Left ventricle myocardium superior (tissue), 1 donor: ENCODE measurements at regions of chr4 and their contacts with region 1.

Region 1: DNA sequence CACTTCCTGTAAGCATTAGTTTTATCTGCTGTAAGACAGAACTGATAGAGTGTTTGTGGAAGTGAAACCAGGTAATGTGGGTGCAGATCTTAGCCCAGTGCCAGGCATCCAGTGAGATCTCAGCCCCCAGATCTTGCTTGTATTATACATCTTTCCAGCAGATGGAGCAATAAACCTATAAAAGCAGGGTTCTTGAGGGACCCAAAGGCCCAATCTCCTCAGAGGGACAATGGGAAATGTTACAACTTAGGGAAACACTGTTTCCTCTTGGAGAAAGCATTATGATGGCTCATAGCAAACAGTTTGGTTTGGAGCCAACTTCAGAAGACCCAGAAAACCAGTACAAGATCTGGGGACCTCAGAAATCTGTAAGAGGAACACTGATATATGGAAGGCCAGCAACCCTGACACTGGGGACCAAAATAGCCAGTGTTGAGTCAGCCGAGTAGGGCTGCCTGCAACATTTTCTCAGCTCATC is 206.3 kb downstream of the SLC7A11 start:
- DNase-seq: no peak
- ATAC-seq: peak; percentile 94

Region 2: GRCh38 chr4:138087066-138087719 is 51.4 kb after region 1 on chr4:
- intact Hi-C with region 1: no loop called
- DNase-seq: no peak
- ATAC-seq: peak; percentile 94

Region 3: DNA sequence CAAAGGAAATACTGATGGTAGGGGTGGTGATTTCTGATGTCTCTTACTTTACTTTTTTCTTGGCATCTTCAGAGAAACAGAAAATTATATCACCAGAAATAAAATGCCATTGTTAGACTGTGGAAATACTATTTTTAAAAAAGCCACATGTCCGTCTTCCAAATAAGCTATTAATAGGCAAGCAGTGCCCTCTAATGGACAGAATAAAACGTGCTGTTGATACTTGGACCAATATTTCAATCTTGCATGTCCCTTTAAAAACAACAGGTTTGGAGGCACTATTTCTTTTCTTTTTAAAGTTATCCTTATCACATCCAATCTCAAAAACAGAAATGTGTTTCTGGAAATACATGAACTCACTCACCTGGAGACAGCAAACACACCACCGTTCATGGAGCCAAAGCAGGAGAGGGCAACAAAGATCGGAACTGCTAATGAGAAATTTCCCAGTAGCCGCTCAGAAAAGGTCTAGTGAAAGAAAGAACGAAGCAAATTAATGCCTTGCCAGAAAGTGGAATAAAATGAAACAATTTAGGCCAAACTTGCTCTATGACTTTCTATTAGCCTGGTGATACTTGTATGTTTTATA is 147.1 kb after region 1 on chr4:
- intact Hi-C with region 1: loop called (anchors 5 kb)
- DNase-seq: no peak
- ATAC-seq: peak; percentile 65

Region 4: DNA sequence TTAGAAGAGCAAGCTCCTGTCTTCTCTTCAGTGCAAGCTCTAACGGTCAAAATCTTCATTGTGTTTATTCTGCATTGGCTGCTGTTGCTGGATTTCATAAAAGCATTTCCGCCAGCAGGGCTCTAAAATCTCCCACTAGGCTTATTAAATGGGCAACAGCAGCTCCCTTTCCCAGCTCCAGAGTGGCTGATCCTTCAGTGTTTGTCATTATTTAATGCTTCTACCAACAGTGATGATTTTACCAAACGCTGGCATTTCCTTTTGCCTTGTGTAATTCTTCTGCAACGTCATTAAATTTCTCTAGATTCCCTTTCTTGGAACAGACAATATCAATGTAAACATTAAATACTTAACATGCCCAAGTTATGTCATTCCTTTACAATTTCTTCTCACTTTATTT is 186.2 kb after region 1 on chr4:
- intact Hi-C with region 1: no loop called
- DNase-seq: no peak
- ATAC-seq: no peak

Region 5: GRCh38 chr4:138680989-138681604 is 645.3 kb after region 1 on chr4:
- intact Hi-C with region 1: loop called (anchors 5 kb)
- DNase-seq: peak; percentile 79
- ATAC-seq: peak; percentile 59

Region 6: GRCh38 chr4:138870737-138871554 is 835.1 kb after region 1 on chr4:
- intact Hi-C with region 1: loop called (anchors 10 kb)
- DNase-seq: no peak
- ATAC-seq: peak; percentile 76